ENCODE measurements at regions of chr2 and their contacts with region 1.

Region 1: DNA sequence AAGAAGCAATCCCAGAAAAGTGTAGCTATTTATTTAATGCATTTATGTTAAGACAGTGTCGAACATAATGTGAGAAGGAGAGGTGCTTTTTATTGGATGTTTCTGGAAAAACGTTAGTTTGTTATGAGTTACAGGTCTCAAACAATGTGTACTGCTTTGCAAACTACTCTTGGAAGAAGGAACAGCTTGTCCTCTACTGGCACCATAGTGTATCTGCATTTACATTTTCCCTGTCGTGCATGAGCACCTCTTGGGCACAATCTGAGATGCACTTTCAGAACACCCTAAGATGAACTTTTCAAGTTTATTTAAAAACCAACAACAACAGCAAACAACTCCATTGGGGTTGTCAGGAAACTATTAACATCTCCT is 22.8 kb downstream of the CCNYL1 start:
- DNase-seq: peak in 1 of 2 experiments; percentile 75
- ATAC-seq: peak; percentile 97 to 99
- H3K4me3 ChIP-seq: no peak overlapping the region
- H3K27ac ChIP-seq: peak overlapping the region in 1 of 2 experiments; percentile 9; a peak in 1 of 6 replicates
- H3K4me1 ChIP-seq: peaks cover 27% of the 10 kb centered on the region
- CTCF ChIP-seq: peak; percentile 83
- EP300 ChIP-seq: no peak
- POLR2A ChIP-seq: no peak
- RAD21 ChIP-seq: peak; percentile 87 to 91

Region 2: GRCh38 chr2:207692206-207693065 is 41.8 kb before region 1 on chr2:
- CTCF ChIA-PET with region 1: interaction called, 11 read pairs
- POLR2A ChIA-PET with region 1: no interaction called
- DNase-seq: peak; percentile 50 to 74
- ATAC-seq: peak; percentile 71 to 89; a peak in 5 of 6 replicates
- H3K4me3 ChIP-seq: no peak overlapping the region
- H3K27ac ChIP-seq: peak overlapping the region in 1 of 2 experiments; percentile 12; a peak in 1 of 6 replicates
- H3K4me1 ChIP-seq: peaks cover 20% of the 10 kb centered on the region
- CTCF ChIP-seq: peak; percentile 58
- EP300 ChIP-seq: no peak
- POLR2A ChIP-seq: no peak
- RAD21 ChIP-seq: peak; percentile 32 to 63; a peak in 4 of 5 replicates

Region 3: DNA sequence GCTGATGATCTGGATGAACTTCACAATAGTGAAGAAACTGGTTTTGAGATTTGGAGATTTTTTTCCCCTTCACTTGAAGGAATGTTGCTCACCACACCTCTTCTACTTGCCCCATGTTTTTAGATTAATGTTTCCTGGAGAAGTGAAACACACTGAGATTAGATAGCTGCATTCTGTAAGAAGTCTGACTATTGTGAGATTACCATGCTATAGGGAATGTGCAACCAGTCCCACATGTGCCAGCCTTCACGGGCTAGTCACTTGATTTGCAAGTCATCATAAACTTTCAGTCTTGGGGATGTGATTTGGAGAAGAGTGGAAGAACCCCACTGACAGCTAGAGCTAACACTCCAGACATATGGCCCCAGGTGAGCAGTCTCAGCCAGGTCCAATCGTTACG is 30.2 kb before region 1 on chr2:
- CTCF ChIA-PET with region 1: no interaction called
- POLR2A ChIA-PET with region 1: no interaction called
- DNase-seq: no peak
- ATAC-seq: peak in 1 of 2 experiments; percentile 14; a peak in 2 of 6 replicates
- H3K4me3 ChIP-seq: no peak overlapping the region
- H3K27ac ChIP-seq: 0 out of 6 replicates have a peak overlapping the region, but pooled peaks of 1 of the 2 experiments have one; percentile 10
- H3K4me1 ChIP-seq: peaks cover 13% of the 10 kb centered on the region
- CTCF ChIP-seq: no peak
- EP300 ChIP-seq: no peak
- POLR2A ChIP-seq: no peak
- RAD21 ChIP-seq: no peak

Measured in A549 (cell line).